Dorsolateral prefrontal cortex (tissue), 120 donors: ENCODE measurements at regions of chr13 and their contacts with region 1.

Region 1: DNA sequence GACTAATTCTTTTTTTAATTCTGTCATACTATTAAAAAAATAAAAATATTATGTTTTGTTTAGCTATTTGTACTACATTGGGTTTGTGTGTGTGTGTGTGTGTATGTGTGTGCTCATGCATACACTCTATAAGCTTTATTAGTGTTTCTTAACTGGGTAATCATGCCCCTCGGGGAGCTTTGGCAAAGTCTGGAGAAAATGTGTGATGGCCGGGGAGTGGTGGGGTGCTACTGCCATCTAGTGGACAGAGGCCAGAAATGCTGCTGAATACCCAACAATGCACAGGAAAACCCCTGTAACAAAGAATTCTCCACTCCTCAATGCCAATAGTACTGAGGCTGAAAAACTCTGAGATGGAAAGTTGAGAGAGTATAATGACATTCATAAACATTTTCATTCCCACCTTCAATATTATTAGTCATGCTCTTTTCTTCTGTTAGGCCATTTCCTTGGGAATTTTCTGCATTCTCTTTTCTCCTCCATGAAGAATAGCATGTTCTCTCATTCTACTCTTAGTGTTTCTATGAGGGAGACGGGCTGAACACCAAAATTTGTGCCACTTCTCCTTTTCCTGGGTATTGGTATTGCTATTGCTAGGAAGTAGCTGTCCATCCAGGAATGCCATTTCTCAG is 157.3 kb downstream of the DNAJC3 start:
- DNase-seq: peak in 9 of 10 donors; percentile 45 to 78 (median 55)
- H3K4me3 ChIP-seq: peak overlapping the region in 3 of 59 donors; percentile 5 to 36 (median 21)
- H3K27ac ChIP-seq: no peak overlapping the region
- H3K27me3 ChIP-seq: no peaks in the 10 kb centered on the region
- CTCF ChIP-seq: peak; percentile 66 to 99 (median 93)

Region 2: DNA sequence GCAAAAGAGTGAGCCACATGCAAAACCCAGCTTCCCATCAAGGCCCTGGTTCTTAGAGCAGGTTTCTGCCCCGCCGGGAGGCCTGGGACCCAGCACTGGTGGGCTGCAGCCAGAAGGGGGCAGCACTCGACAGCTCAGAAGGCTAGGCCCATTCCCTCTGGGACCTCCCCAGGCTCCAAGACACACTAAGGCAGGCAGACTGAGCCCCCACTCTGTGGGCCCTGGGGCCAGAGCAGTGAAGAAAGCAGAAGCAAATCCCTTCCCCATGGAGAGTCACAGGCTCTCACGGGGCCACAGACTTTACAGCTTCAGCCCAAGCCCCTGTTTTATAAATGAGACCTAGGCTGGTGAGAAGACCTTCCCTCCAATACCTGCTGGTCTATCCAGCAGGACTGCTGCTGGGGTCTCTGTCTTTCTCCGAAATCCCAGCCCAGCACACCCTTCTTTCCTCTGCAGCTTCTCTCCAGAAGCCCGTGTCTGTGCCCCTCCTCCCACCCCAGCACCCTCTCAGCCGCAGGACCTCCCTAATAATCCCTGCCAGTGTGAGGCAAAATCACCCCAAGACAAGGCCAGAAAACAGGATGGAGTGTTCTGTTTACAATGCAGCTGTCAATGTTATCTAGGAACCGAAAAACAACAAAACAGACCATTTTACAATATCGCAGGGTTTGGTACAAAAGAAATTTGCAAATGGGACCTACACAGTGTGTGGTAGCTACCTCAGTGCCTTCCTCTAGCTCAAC is 642.3 kb before region 1 on chr13:
- intact Hi-C with region 1: loop called in 1 of 2 experiments (anchors 10 kb)
- DNase-seq: peak; percentile 18 to 78 (median 62)
- H3K4me3 ChIP-seq: no peak overlapping the region
- H3K27ac ChIP-seq: peak overlapping the region in 3 of 59 donors; percentile 4 to 40 (median 10)
- H3K27me3 ChIP-seq: no peaks in the 10 kb centered on the region
- CTCF ChIP-seq: peak in 55 of 56 donors; percentile 54 to 90 (median 76)

Region 3: DNA sequence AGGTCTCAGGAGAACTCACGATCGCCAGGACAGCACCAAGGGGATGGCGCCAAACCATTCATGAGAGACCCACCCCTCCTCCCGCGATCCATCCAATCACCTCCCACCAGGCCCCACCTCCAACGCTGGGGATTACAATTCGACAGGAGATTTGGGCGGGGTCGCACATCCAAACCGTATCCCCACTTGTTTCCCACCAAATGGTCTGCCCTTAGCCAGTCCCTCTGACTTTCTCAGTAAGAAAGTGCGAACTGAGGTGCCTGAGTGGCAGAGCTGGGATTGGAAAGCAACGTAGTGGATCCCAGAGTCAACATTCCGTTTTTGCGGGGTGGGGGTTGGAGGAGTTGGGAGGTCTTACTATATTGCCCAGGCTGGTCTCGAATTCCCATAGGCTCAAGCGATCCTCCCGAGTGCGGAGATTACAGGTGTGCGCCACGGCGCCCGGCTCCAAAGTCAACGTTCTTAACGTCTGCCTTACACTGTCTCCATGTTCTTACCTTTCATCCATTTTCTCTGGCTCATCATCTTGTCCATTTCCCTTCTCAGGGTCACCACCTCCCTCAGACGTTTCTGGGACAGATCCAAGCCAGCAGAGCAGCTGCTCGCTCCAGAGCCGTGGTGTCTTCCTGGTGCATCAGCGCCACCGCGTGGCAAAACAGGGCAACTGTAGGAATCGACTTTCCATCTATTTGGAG is 430.3 kb before region 1 on chr13:
- intact Hi-C with region 1: loop called in 1 of 2 experiments (anchors 10 kb)
- DNase-seq: peak; percentile 43 to 91 (median 83)
- H3K4me3 ChIP-seq: peak overlapping the region; percentile 18 to 70 (median 54)
- H3K27ac ChIP-seq: peak overlapping the region in 1 of 59 donors; percentile 7
- H3K27me3 ChIP-seq: no peaks in the 10 kb centered on the region
- CTCF ChIP-seq: peak; percentile 89 to 99 (median 95)

Region 4: GRCh38 chr13:95536632-95537241 is 297.5 kb before region 1 on chr13:
- intact Hi-C with region 1: loop called in 1 of 2 experiments (anchors 5 kb)
- DNase-seq: no peak
- H3K4me3 ChIP-seq: no peak overlapping the region
- H3K27ac ChIP-seq: no peak overlapping the region
- H3K27me3 ChIP-seq: peaks cover 0 to 8% (median 0%) of the 10 kb centered on the region in 45 donors
- CTCF ChIP-seq: peak; percentile 27 to 75 (median 54)

Region 5: GRCh38 chr13:95624020-95624419 is 210.2 kb before region 1 on chr13:
- intact Hi-C with region 1: loop called (anchors 2 kb)
- DNase-seq: peak in 1 of 10 donors; percentile 11
- H3K4me3 ChIP-seq: no peak overlapping the region
- H3K27ac ChIP-seq: no peak overlapping the region
- H3K27me3 ChIP-seq: no peaks in the 10 kb centered on the region
- CTCF ChIP-seq: peak; percentile 40 to 83 (median 68)

Region 6: GRCh38 chr13:95676762-95677563 is 157.3 kb before region 1 on chr13 and contains the start of gene DNAJC3:
- intact Hi-C with region 1: loop called in 1 of 2 experiments (anchors 10 kb)
- DNase-seq: peak; percentile 95 to 100 (median 98)
- H3K4me3 ChIP-seq: peak within 1 kb of the TSS; percentile 71 to 98 (median 92)
- H3K27ac ChIP-seq: peak within 1 kb of the TSS; percentile 33 to 97 (median 90)
- H3K27me3 ChIP-seq: no peaks in the 10 kb centered on the region
- CTCF ChIP-seq: peak in 23 of 56 donors; percentile 6 to 48 (median 22)
- total RNA-seq, gene DNAJC3: 15.8 to 41.6 (median 22.6) TPM

Region 7: DNA sequence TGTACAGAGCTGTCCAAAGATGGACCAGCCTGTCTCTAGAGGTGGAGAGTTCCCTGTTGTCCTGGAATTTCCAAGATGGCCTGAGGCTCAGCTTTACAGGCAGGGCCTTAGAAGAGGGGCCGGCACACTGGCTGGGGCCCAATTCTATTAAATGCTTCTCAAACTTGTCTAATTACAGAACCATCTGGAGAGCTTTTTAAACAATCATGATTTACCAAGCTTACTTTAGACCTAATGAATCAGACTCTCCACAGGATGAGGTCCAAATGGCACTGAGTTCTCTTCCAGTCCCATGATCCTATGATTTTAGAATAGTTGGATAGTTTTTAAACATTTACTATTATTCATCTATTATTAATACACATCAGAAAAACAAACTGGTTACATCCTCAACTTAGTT is 33.8 kb before region 1 on chr13:
- intact Hi-C with region 1: no loop called
- DNase-seq: no peak
- H3K4me3 ChIP-seq: no peak overlapping the region
- H3K27ac ChIP-seq: no peak overlapping the region
- H3K27me3 ChIP-seq: no peaks in the 10 kb centered on the region
- CTCF ChIP-seq: no peak

Region 8: DNA sequence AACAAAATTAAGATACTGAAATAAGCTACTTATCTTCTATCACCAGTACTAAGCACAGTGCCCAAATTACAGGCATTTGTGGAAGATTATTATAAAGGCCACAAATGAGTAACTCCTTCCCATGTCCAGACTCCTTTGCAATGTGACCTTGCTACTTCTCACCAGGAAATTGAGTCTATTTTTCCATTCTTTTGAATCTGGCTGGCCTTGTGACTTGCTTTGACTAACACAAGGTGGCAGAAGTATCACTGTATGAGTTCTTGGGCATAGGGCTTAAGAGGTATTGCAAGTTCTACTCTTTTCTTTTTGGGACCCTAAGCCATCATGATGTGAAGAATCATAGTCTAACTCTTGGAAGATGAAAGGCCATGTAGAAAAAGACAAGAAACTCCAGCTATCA is 169.1 kb after region 1 on chr13:
- intact Hi-C with region 1: no loop called
- DNase-seq: no peak
- H3K4me3 ChIP-seq: no peak overlapping the region
- H3K27ac ChIP-seq: peak overlapping the region in 1 of 59 donors; percentile 32
- H3K27me3 ChIP-seq: no peaks in the 10 kb centered on the region
- CTCF ChIP-seq: no peak

Region 9: DNA sequence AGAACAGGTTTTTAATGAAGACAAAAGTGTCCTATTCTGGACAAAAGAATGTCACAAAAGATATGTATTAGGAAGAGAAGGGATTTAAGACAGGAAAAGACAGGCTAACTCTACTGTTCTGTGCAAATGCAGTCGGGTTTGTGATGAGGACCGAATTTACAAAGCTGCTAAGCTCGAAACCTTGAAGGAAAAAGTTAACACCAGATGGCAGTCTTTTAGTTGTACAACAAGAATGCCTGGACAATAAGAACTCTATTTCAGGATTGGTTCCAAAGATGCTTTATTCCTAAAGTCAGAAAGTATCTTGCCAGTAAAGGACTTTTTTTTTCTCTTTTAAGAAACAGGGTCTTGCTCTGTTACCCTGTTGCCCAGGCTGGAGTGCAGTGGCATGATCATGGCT is 306.8 kb after region 1 on chr13:
- intact Hi-C with region 1: no loop called
- DNase-seq: no peak
- H3K4me3 ChIP-seq: no peak overlapping the region
- H3K27ac ChIP-seq: no peak overlapping the region
- H3K27me3 ChIP-seq: no peaks in the 10 kb centered on the region
- CTCF ChIP-seq: peak in 44 of 56 donors; percentile 15 to 64 (median 34)